Sigmoid colon (tissue), 7 donors: ENCODE measurements at regions of chr22 and their contacts with region 1.

Region 1: GRCh38 chr22:29031227-29032011 is 30.2 kb downstream of the C22orf31 start:
- DNase-seq: peak; percentile 87
- H3K4me3 ChIP-seq: peak overlapping the region; percentile 30 to 60 (median 52)
- H3K27ac ChIP-seq: peak overlapping the region; percentile 73 to 85 (median 84)
- H3K4me1 ChIP-seq: peaks cover 0 to 33% (median 31%) of the 10 kb centered on the region in 4 donors
- H3K27me3 ChIP-seq: no peaks in the 10 kb centered on the region
- CTCF ChIP-seq: peak in 2 of 4 experiments; percentile 8 to 16
- EP300 ChIP-seq: peak in 1 of 4 donors; percentile 76
- POLR2A ChIP-seq: no peak

Region 2: DNA sequence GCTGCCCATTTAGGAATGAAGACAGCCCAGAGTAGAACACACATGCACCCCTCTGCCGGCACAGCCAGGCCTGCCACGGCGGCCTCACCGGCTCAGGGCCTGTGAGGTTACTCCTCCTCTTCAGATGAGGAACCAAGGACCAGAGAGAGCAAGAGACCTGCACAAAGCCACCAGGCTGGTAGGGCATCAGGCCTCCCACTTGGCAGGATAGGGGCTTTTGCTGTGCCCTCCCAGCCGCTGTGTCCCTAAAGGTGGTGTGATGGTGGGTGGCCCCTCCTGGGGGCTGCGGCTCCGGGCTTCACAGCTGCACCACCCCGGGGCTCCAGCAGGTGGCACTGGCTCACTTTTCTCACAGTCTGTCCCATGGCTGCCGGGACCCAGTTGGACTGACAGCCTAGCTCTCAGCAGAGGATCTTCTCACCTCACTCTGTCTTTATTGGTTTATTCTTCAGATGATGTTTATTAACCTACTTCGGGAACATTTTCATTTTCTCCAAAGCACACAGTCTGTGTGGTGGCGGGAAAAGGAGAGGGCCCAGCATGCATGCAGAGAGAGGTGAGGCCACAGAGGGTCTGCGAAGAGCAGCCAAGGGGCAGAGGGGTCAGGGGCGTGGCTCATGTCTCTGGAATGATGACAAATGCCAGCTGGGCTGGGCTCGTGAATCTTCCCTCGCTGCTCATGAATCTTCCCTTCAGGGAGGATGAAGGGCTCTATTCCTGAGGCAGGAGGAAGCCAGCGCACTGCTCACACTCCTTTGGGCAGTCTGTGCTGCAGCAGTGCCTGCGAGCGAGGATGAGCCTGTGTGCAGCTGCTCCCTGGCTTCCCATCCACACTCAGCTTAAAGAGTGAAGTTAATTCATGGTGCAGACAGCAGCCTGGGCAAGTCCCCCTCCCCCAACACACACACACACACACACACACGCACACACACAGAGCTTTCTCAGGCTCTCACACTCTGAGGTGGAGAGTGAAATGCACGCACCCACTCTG is 1011.2 kb before region 1 on chr22:
- intact Hi-C with region 1: loop called (anchors 10 kb)
- DNase-seq: peak; percentile 90
- H3K4me3 ChIP-seq: peak overlapping the region in 2 of 4 donors; percentile 4 to 8
- H3K27ac ChIP-seq: peak overlapping the region in 2 of 4 donors; percentile 40 to 59
- H3K4me1 ChIP-seq: peaks cover 0 to 17% (median 13%) of the 10 kb centered on the region in 4 donors
- H3K27me3 ChIP-seq: no peaks in the 10 kb centered on the region
- CTCF ChIP-seq: peak; percentile 87 to 98 (median 94)
- EP300 ChIP-seq: no peak
- POLR2A ChIP-seq: no peak

Region 3: DNA sequence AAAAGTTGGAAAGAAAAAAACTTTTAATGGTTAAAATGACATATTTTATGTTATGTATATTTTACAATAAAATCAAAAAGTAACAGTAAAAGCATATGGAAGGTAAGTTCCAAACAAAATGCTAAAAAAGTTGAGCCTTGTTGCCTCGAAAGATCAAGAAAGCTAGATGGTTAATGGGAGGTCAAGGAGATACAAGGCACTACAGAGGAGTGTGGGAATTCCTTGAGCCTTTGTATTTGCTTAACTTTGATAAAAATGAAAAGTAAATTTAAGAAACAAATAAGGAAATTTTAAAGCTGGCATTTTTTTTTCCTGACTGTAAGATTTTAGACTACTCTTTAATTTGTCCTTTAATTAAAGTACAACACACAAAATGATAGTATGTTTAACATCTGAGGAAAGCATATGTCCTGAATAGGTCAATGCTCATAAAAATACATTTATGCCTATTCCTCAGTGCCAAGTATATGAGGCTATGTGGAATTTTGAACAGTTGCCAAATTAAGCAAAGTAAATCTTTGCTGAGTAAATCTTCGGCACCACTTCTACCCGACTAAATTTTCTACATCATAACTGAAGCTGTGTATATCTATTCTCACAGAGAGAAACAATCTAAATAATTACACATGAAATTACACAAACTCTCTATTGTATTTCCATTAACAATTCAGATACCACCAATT is 460.6 kb before region 1 on chr22:
- intact Hi-C with region 1: no loop called
- DNase-seq: no peak
- H3K4me3 ChIP-seq: no peak overlapping the region
- H3K27ac ChIP-seq: no peak overlapping the region
- H3K4me1 ChIP-seq: no peaks in the 10 kb centered on the region
- H3K27me3 ChIP-seq: no peaks in the 10 kb centered on the region
- CTCF ChIP-seq: no peak
- EP300 ChIP-seq: no peak
- POLR2A ChIP-seq: no peak

Region 4: DNA sequence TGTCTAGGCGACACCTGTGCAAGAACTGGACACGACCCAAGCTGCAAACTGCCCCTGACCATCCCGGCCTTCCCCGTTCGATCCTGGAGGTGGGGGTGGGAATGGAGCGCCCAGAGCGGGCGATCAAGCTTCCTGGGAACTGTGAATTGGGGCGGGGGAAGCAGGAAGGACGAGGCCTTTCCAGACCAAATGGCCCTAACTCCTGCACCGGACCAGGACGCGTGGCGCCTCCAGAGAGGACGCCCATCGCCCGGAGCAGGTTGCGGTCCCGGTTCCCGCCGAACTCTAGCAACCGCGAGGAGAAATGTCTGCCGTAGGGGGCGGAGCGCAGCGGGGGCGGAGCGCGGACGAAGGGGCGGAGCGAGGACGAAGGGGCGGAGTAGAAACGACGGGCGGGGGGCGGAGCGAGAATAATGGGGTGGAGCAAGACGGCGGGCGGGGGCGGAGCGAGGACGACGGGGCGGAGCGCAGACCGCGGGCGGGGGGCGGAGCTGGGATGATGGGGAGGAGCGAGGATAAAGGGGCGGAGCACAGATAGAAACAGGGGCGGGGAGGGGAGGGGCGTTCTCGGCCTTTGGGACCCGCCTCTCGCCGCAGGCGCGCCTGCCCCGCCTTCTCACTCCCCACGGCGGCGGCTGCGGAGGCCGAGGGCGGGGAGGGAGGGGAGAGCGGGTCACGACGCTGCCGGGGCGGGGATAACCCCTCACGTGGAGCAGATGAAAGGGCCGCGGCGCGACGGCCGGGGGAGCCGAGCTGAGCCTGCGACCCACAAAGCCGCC is 148.4 kb before region 1 on chr22 and contains the start of gene ZNRF3:
- intact Hi-C with region 1: loop called (anchors 5 kb)
- DNase-seq: peak; percentile 97
- H3K4me3 ChIP-seq: peak within 1 kb of the TSS; percentile 49 to 71 (median 64)
- H3K27ac ChIP-seq: peak within 1 kb of the TSS; percentile 77 to 87 (median 80)
- H3K4me1 ChIP-seq: peaks cover 0 to 46% (median 36%) of the 10 kb centered on the region in 4 donors
- H3K27me3 ChIP-seq: no peaks in the 10 kb centered on the region
- CTCF ChIP-seq: no peak
- EP300 ChIP-seq: no peak
- POLR2A ChIP-seq: no peak
- total RNA-seq, gene ZNRF3: 8.9 to 13.6 (median 9.7) TPM

Region 5: DNA sequence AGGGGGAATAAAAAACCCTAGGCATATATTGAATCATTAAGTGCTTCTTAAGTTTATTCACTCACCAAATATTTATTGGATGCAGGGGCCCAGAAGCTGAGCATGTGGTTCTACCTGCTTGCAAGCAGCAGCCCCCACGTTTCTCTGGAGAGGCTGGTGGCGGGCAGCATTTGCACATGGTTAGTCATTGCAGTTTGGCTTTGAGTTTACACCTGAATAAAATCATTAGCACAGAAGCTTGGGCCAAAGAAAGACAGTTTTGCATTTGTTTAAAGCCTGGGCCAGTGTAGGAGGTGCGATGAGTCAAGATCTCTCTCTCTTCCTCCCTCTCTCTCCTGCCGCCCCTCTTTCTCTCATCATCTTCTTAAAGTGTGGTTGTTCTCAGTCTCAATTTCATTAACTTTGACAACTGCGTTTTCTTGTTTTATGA is 42.4 kb before region 1 on chr22:
- intact Hi-C with region 1: loop called (anchors 5 kb)
- DNase-seq: no peak
- H3K4me3 ChIP-seq: no peak overlapping the region
- H3K27ac ChIP-seq: peak overlapping the region; percentile 55 to 68 (median 62)
- H3K4me1 ChIP-seq: peaks cover 0 to 36% (median 27%) of the 10 kb centered on the region in 4 donors
- H3K27me3 ChIP-seq: no peaks in the 10 kb centered on the region
- CTCF ChIP-seq: no peak
- EP300 ChIP-seq: no peak
- POLR2A ChIP-seq: no peak

Region 6: DNA sequence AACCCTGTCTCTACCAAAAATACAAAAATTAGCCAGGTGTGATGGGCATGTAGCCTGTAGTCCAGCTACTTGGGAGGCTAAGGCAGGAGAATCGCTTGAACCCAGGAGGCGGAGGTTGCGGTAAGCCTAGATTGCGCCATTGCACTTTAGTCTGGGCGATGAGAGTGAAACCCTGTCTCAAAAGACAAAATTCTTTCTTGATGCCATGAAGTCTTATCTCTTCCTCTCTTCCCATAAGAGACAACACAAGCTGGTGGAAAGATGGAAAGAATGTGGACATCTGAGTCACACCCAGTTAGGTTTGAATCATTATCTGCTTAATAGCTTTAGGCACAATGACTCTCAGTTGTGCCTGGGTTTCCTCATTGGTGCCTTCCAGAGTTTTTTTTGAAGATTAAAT is 76.7 kb after region 1 on chr22:
- intact Hi-C with region 1: no loop called
- DNase-seq: no peak
- H3K4me3 ChIP-seq: no peak overlapping the region
- H3K27ac ChIP-seq: no peak overlapping the region
- H3K4me1 ChIP-seq: no peaks in the 10 kb centered on the region
- H3K27me3 ChIP-seq: no peaks in the 10 kb centered on the region
- CTCF ChIP-seq: no peak
- EP300 ChIP-seq: no peak
- POLR2A ChIP-seq: no peak

Region 7: GRCh38 chr22:29156524-29156923 is 125.1 kb after region 1 on chr22:
- intact Hi-C with region 1: no loop called
- DNase-seq: peak; percentile 46
- H3K4me3 ChIP-seq: no peak overlapping the region
- H3K27ac ChIP-seq: no peak overlapping the region
- H3K4me1 ChIP-seq: peaks cover 0 to 22% (median 20%) of the 10 kb centered on the region in 4 donors
- H3K27me3 ChIP-seq: no peaks in the 10 kb centered on the region
- CTCF ChIP-seq: no peak
- EP300 ChIP-seq: no peak
- POLR2A ChIP-seq: no peak

Region 8: GRCh38 chr22:29202212-29203192 is 171.1 kb after region 1 on chr22:
- intact Hi-C with region 1: no loop called
- DNase-seq: no peak
- H3K4me3 ChIP-seq: no peak overlapping the region
- H3K27ac ChIP-seq: no peak overlapping the region
- H3K4me1 ChIP-seq: peaks cover 0 to 12% (median 9%) of the 10 kb centered on the region in 4 donors
- H3K27me3 ChIP-seq: peaks cover 0 to 5% (median 5%) of the 10 kb centered on the region in 3 donors
- CTCF ChIP-seq: peak in 1 of 4 experiments; percentile 12
- EP300 ChIP-seq: no peak
- POLR2A ChIP-seq: no peak